Activated CD4-positive, alpha-beta memory T cell treated with anti-CD3 and anti-CD28 coated beads, Interleukin-2, amount 10 ng/mL, durations not matched to agents 7 days and 5 days (primary cell): ENCODE measurements at regions of chr17 and their contacts with region 1.

Region 1: GRCh38 chr17:18183334-18184142 is at the start of gene ALKBH5:
- DNase-seq: peak; percentile 97
- H3K4me3 Mint-ChIP-seq: peak within 1 kb of the TSS; percentile 94
- H3K27ac Mint-ChIP-seq: peak within 1 kb of the TSS; percentile 100
- H3K4me1 Mint-ChIP-seq: peaks cover 51% of the 10 kb centered on the region
- H3K27me3 Mint-ChIP-seq: no peaks in the 10 kb centered on the region
- total RNA-seq, gene ALKBH5: 118 to 125 TPM

Region 2: DNA sequence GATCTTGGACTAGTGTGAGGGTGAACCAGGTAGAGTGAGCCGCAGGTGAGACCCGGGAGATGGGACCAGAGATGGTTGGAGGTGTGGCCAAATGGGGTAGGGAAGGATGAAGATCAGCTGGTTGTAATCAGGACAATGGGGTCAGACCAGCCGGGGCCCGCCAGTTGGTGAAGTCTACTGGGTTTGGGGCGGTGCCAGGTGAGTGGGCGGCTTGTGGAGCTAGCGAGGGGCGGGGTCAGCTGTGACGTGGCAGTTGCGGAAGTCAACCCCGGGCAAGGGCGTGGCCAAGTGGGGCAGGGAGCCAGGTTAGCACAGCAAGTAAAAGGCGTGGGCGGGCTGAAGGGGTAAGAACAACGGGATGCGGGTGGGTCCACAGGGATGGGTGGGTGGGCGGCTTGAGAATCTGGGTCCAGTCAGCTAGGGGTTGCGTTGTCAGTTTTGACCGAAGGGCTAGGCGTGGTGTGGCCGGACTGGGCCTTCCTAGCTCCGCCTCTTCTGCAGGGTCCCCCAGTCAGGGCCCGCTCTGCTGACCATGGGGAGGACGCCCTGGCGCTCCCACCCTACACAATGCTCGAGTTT is 25.4 kb before region 1 on chr17:
- CTCF ChIA-PET with region 1: interaction called, 6 read pairs
- POLR2A ChIA-PET with region 1: interaction called, 11 read pairs
- DNase-seq: peak; percentile 95
- H3K4me3 Mint-ChIP-seq: peak overlapping the region; percentile 75
- H3K27ac Mint-ChIP-seq: peak overlapping the region; percentile 51
- H3K4me1 Mint-ChIP-seq: peaks cover 12% of the 10 kb centered on the region
- H3K27me3 Mint-ChIP-seq: peaks cover 1% of the 10 kb centered on the region

Region 3: GRCh38 chr17:18166894-18167293 is 16.6 kb before region 1 on chr17:
- CTCF ChIA-PET with region 1: interaction called, 4 read pairs
- POLR2A ChIA-PET with region 1: interaction called, 13 read pairs
- DNase-seq: no peak
- H3K4me3 Mint-ChIP-seq: no peak overlapping the region
- H3K27ac Mint-ChIP-seq: no peak overlapping the region
- H3K4me1 Mint-ChIP-seq: no peaks in the 10 kb centered on the region
- H3K27me3 Mint-ChIP-seq: no peaks in the 10 kb centered on the region

Region 4: GRCh38 chr17:18198530-18198929 is 15.0 kb after region 1 on chr17:
- CTCF ChIA-PET with region 1: interaction called, 5 read pairs
- POLR2A ChIA-PET with region 1: interaction called, 11 read pairs
- DNase-seq: no peak
- H3K4me3 Mint-ChIP-seq: no peak overlapping the region
- H3K27ac Mint-ChIP-seq: no peak overlapping the region
- H3K4me1 Mint-ChIP-seq: peaks cover 17% of the 10 kb centered on the region
- H3K27me3 Mint-ChIP-seq: no peaks in the 10 kb centered on the region